ENCODE measurements at regions of chr7 and their contacts with region 1.

Region 1: DNA sequence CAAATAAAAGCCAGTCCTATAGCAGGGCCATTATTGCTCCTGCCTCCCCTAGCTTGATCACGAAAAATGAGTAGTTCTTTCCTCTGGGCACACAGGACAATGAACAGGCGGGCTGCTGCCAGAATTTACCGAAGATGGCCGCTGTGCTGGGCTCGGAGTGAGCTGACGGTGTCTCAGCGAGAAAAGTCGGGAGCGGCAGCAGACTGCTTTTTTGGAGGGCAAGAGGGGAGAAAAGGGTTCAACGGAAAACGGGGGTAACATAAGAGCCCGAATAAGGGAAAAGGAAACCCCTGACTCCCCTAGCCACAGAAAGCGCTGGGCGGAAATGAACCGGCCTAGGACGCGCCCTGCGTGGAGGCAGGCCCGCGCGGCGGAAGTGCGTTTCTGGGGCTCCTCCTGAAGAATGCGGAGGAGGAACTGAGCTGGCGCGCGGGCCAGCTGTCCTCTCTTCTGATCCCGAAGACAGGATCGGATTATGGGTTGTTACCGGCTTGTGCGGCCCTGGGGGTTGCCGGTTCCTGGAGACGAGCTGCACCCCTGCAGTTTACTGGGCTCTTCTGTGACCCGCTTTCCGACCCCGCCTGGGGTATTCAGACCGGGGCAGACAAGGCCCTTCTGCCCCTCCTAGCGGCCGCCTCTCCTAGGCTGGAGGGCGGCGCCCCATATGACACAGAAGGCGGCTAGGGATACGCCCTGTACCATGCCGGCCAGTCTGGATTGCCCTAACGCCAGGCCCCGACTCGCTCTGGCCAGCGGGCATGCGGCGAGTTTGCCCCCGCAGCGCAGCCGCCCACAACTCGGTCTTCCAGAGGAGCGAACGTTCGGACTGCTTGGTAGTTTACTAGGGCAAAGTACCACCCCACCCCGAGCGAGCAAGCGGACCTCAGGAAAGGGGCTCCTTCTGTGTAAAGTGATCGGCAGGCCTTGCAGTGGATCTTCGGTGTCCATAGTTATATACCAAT is 30.1 kb upstream of the KMT2E start:
- DNase-seq: peak; percentile 93
- ATAC-seq: peak; percentile 89
- H3K4me3 Mint-ChIP-seq: peak overlapping the region; percentile 87
- H3K27ac Mint-ChIP-seq: peak overlapping the region; percentile 99
- H3K4me1 Mint-ChIP-seq: peaks cover 74% of the 10 kb centered on the region
- H3K27me3 Mint-ChIP-seq: no peaks in the 10 kb centered on the region

Region 2: GRCh38 chr7:104686286-104686685 is 297.6 kb before region 1 on chr7:
- CTCF ChIA-PET with region 1: no interaction called
- POLR2A ChIA-PET with region 1: no interaction called
- intact Hi-C with region 1: no loop called
- DNase-seq: no peak
- ATAC-seq: no peak
- H3K4me3 Mint-ChIP-seq: no peak overlapping the region
- H3K27ac Mint-ChIP-seq: no peak overlapping the region
- H3K4me1 Mint-ChIP-seq: no peaks in the 10 kb centered on the region
- H3K27me3 Mint-ChIP-seq: peaks cover 9% of the 10 kb centered on the region

Region 3: DNA sequence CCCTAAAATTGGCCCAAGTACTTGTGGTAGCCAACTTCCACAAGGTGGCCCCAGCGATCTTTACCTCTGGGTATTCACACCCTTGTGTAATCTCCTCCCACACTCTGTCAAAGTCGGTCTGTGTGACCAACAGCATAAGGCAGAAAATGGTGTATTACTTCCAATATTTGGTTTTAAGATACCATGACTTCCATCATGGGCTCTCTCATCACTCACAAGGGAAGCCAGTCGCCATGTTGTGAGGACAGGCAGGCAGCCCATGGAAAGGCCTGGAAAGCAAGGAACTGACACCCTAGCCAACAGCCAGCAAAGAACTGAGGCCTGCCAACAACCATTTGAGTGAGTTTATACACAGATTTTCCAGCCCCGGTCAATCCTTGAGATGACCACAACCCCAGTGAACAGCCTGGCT is 60.8 kb before region 1 on chr7:
- CTCF ChIA-PET with region 1: interaction called, 13 read pairs
- POLR2A ChIA-PET with region 1: no interaction called
- intact Hi-C with region 1: loop called (anchors 1 kb)
- DNase-seq: peak; percentile 89
- ATAC-seq: peak; percentile 99
- H3K4me3 Mint-ChIP-seq: no peak overlapping the region
- H3K27ac Mint-ChIP-seq: peak overlapping the region; percentile 59
- H3K4me1 Mint-ChIP-seq: peaks cover 4% of the 10 kb centered on the region
- H3K27me3 Mint-ChIP-seq: no peaks in the 10 kb centered on the region

Region 4: GRCh38 chr7:104971290-104972071 is 12.4 kb before region 1 on chr7:
- CTCF ChIA-PET with region 1: interaction called, 17 read pairs
- POLR2A ChIA-PET with region 1: interaction called, 3 read pairs
- intact Hi-C with region 1: no loop called
- DNase-seq: no peak
- ATAC-seq: no peak
- H3K4me3 Mint-ChIP-seq: no peak overlapping the region
- H3K27ac Mint-ChIP-seq: no peak overlapping the region
- H3K4me1 Mint-ChIP-seq: peaks cover 12% of the 10 kb centered on the region
- H3K27me3 Mint-ChIP-seq: no peaks in the 10 kb centered on the region

Region 5: GRCh38 chr7:105036217-105037168 is 52.6 kb after region 1 on chr7:
- CTCF ChIA-PET with region 1: interaction called, 39 read pairs
- POLR2A ChIA-PET with region 1: no interaction called
- intact Hi-C with region 1: loop called (anchors 1 to 2 kb)
- DNase-seq: no peak
- ATAC-seq: peak; percentile 17
- H3K4me3 Mint-ChIP-seq: no peak overlapping the region
- H3K27ac Mint-ChIP-seq: peak overlapping the region; percentile 42
- H3K4me1 Mint-ChIP-seq: peaks cover 63% of the 10 kb centered on the region
- H3K27me3 Mint-ChIP-seq: no peaks in the 10 kb centered on the region

Region 6: DNA sequence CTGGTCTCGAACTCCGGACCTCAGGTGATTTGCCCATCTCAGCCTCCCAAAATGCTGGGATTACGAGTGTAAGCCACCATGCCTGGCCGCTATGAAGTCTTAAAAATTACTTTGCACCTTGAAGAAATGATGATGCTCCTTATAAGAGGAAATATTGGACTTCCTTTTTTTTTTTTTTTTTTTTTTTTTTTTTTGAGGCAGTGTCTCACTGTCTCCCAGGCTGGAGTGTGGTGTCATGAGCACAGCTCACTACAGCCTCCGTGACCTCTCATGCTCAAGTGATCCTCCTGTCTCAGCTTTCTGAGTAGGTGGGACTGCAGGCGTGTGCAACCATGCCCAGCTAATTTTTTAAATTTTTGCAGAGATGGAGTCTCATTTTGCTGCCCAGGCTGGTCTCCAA is 95.5 kb after region 1 on chr7:
- CTCF ChIA-PET with region 1: interaction called, 11 read pairs
- POLR2A ChIA-PET with region 1: no interaction called
- intact Hi-C with region 1: no loop called
- DNase-seq: no peak
- ATAC-seq: no peak
- H3K4me3 Mint-ChIP-seq: no peak overlapping the region
- H3K27ac Mint-ChIP-seq: no peak overlapping the region
- H3K4me1 Mint-ChIP-seq: no peaks in the 10 kb centered on the region
- H3K27me3 Mint-ChIP-seq: no peaks in the 10 kb centered on the region

Region 7: GRCh38 chr7:105387621-105388372 is 403.9 kb after region 1 on chr7:
- CTCF ChIA-PET with region 1: interaction called, 3 read pairs
- POLR2A ChIA-PET with region 1: interaction called, 4 read pairs
- intact Hi-C with region 1: loop called in 1 of 2 experiments (anchors 1 kb)
- DNase-seq: peak; percentile 67
- ATAC-seq: peak; percentile 40
- H3K4me3 Mint-ChIP-seq: peak overlapping the region; percentile 77
- H3K27ac Mint-ChIP-seq: peak overlapping the region; percentile 55
- H3K4me1 Mint-ChIP-seq: peaks cover 35% of the 10 kb centered on the region
- H3K27me3 Mint-ChIP-seq: no peaks in the 10 kb centered on the region

Region 8: GRCh38 chr7:105589356-105590077 is 605.7 kb after region 1 on chr7:
- CTCF ChIA-PET with region 1: interaction called, 7 read pairs
- POLR2A ChIA-PET with region 1: no interaction called
- intact Hi-C with region 1: loop called in 1 of 2 experiments (anchors 2 kb)
- DNase-seq: peak; percentile 77
- ATAC-seq: peak; percentile 98
- H3K4me3 Mint-ChIP-seq: no peak overlapping the region
- H3K27ac Mint-ChIP-seq: no peak overlapping the region
- H3K4me1 Mint-ChIP-seq: peaks cover 8% of the 10 kb centered on the region
- H3K27me3 Mint-ChIP-seq: no peaks in the 10 kb centered on the region